ENCODE measurements at regions of chr7 and their contacts with region 1.

Region 1: DNA sequence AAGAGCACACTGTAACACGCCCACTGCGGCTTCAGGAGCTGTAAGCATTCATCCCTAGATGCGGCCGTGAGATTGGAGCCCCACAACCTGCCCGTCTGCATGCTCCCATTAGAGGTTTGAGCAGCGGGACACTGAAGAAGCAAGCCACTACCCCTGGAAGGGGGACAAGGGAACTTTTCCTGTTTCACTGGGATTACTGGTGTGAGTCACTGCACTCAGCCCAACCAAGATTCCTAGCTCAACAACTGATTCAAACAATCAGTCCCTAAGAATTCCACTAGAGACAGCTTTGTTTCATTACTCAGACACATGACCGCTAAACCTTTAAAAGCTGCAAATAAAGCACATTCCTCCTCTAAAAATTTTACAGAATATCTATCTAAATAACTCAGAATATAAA is 69.8 kb downstream of the ORC5 start:
- DNase-seq: no peak
- ATAC-seq: no peak
- H3K4me3 ChIP-seq: no peak overlapping the region
- H3K4me3 Mint-ChIP-seq: no peak overlapping the region
- H3K27ac ChIP-seq: no peak overlapping the region
- H3K27ac Mint-ChIP-seq: no peak overlapping the region
- H3K4me1 ChIP-seq: no peaks in the 10 kb centered on the region
- H3K4me1 Mint-ChIP-seq: no peaks in the 10 kb centered on the region
- H3K27me3 ChIP-seq: no peaks in the 10 kb centered on the region
- H3K27me3 Mint-ChIP-seq: no peaks in the 10 kb centered on the region

Region 2: DNA sequence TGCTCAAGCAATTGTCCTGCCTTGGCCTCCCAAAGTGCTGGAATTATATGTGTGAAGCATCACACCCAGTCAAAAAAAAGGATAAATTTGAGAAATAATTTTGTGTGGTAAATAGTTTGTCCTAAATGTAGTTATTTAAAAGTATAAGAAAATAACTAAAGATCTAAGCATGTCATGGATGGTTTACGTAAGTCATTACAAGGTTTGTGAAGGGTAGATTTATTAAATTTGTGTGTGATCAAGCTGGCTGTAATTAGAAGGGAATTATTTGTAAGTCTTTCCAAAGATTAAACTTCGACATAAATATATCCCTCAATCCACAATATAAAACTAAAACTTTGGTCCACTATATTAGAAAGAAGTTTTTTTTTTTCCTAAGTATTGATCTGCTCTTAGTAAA is 41.2 kb after region 1 on chr7:
- CTCF ChIA-PET with region 1: no interaction called
- POLR2A ChIA-PET with region 1: interaction called in 1 of 2 experiments, 10 read pairs
- DNase-seq: no peak
- ATAC-seq: no peak
- H3K4me3 ChIP-seq: no peak overlapping the region
- H3K4me3 Mint-ChIP-seq: no peak overlapping the region
- H3K27ac ChIP-seq: no peak overlapping the region
- H3K27ac Mint-ChIP-seq: no peak overlapping the region
- H3K4me1 ChIP-seq: no peaks in the 10 kb centered on the region
- H3K4me1 Mint-ChIP-seq: no peaks in the 10 kb centered on the region
- H3K27me3 ChIP-seq: no peaks in the 10 kb centered on the region
- H3K27me3 Mint-ChIP-seq: no peaks in the 10 kb centered on the region